Right ventricle myocardium inferior (tissue), 1 donor: ENCODE measurements at regions of chr1 and their contacts with region 1.

Region 1: GRCh38 chr1:224392411-224393249 is 36.0 kb downstream of the CNIH4 start:
- DNase-seq: no peak
- ATAC-seq: no peak

Region 2: DNA sequence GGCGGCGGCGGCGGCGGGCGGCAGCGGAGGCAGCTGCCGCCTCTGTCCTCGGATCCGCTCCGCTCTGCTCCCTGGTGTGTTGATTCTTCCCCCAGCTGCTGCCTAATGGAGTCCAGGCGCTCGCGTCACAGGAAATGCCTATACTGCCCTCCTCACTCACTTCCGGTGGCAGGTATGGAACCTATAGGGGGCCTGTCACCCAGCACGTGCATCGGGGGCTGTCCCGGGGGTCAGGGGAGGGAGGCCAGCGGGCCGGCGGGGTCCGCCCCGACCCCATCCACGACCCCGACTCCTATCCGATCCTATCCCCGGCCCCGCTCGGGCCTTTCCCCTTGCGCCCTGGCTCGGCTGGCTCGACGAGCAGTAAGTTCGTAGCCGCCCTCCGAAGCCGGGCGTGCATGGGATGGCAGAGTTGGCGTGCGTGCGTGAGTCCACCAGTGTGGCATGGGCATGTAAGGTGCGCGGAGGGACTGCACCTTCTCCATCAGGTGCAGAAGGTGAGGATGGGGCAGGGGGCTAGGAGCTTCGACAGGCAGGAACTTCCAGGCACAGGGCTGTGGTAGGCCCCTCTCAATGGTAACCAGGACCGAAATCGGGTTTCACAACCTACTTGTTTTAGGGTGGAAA is 42.2 kb after region 1 on chr1 and contains the start of gene WDR26:
- intact Hi-C with region 1: loop called (anchors 5 kb)
- DNase-seq: peak; percentile 85
- ATAC-seq: peak; percentile 84
- total RNA-seq, gene WDR26: 55.4 TPM